ENCODE measurements at regions of chr17 and their contacts with region 1.

Region 1: DNA sequence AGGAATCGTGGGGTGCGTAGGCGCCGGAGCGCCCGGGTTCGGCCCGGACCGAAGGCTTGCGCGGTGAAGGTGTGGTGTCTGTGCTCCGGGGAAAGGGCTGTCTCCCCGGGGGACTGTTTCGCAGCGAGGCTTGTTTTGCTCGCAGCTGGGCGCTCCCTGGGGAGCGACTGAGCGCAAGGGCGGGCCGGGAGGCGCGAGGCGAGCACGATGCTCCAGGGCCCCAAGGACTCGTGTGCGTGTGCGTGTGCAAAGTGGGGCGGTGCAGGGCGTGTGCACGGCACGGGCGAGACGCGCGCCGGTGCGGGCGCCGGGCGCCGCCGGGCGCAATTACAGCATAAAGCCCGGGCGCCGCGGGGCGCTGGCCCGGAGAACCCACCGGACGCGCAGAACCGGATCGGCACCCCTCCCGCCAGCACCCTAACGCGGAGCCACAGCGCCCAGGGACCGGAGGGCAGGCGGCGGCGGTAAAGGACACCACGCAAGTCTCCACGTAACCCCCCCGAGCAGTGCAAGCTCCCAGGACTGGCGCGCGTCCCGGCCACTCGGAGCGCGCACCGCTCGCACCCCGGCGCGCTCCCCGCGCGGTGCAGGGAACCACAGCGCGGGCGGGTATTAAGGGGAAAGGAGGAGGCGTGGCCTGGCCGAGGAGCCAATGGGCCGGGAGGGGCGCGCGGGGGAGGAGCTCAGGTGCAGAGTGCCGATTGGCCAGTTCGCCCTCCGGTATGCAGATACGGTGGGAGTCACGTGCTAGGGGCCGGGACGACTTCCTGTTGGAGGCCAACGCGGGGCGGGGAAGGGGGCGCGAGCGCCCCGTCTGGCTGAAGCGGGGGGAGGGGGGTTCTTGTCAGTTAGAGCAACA is at the start of gene TNRC6C:
- DNase-seq: peak; percentile 87
- ATAC-seq: peak; percentile 96
- H3K4me3 ChIP-seq: peak within 1 kb of the TSS; percentile 75
- H3K27ac ChIP-seq: no peak within 1 kb of the TSS
- H3K4me1 ChIP-seq: peaks cover 16% of the 10 kb centered on the region
- H3K27me3 ChIP-seq: peaks cover 0 to 3% of the 10 kb centered on the region in 2 experiments; a peak in 2 of 4 replicates
- CTCF ChIP-seq: peak in 2 of 3 experiments; percentile 20 to 38; a peak in 3 of 6 replicates
- EP300 ChIP-seq: no peak; a peak in 2 of 4 replicates
- POLR2A ChIP-seq: peak; percentile 100
- RAD21 ChIP-seq: no peak
- polyA plus RNA-seq, gene TNRC6C: 0.40 to 0.43 TPM

Region 2: GRCh38 chr17:77319211-77320043 is 638.7 kb before region 1 on chr17:
- CTCF ChIA-PET with region 1: no interaction called
- POLR2A ChIA-PET with region 1: interaction called, 7 read pairs
- RAD21 ChIA-PET with region 1: no interaction called
- SMC1A ChIA-PET with region 1: no interaction called
- in situ Hi-C with region 1: no loop called
- intact Hi-C with region 1: loop called (anchors 10 kb)
- DNase-seq: no peak
- ATAC-seq: peak; percentile 43
- H3K4me3 ChIP-seq: peak overlapping the region; percentile 84
- H3K27ac ChIP-seq: peak overlapping the region; percentile 88
- H3K4me1 ChIP-seq: peaks cover 50% of the 10 kb centered on the region
- H3K27me3 ChIP-seq: no peaks in the 10 kb centered on the region
- CTCF ChIP-seq: no peak
- EP300 ChIP-seq: peak in 1 of 2 experiments; percentile 46; a peak in 1 of 4 replicates
- POLR2A ChIP-seq: peak; percentile 82
- RAD21 ChIP-seq: no peak

Region 3: GRCh38 chr17:77834170-77835115 is 123.6 kb before region 1 on chr17:
- CTCF ChIA-PET with region 1: no interaction called
- POLR2A ChIA-PET with region 1: interaction called, 9 read pairs
- RAD21 ChIA-PET with region 1: interaction called, 21 read pairs
- SMC1A ChIA-PET with region 1: interaction called, 7 read pairs
- in situ Hi-C with region 1: no loop called
- intact Hi-C with region 1: no loop called
- DNase-seq: peak; percentile 49
- ATAC-seq: peak; percentile 97
- H3K4me3 ChIP-seq: no peak overlapping the region
- H3K27ac ChIP-seq: no peak overlapping the region
- H3K4me1 ChIP-seq: peaks cover 6% of the 10 kb centered on the region
- H3K27me3 ChIP-seq: no peaks in the 10 kb centered on the region; a peak in 1 of 4 replicates
- CTCF ChIP-seq: no peak
- EP300 ChIP-seq: no peak
- POLR2A ChIP-seq: no peak
- RAD21 ChIP-seq: no peak

Region 4: DNA sequence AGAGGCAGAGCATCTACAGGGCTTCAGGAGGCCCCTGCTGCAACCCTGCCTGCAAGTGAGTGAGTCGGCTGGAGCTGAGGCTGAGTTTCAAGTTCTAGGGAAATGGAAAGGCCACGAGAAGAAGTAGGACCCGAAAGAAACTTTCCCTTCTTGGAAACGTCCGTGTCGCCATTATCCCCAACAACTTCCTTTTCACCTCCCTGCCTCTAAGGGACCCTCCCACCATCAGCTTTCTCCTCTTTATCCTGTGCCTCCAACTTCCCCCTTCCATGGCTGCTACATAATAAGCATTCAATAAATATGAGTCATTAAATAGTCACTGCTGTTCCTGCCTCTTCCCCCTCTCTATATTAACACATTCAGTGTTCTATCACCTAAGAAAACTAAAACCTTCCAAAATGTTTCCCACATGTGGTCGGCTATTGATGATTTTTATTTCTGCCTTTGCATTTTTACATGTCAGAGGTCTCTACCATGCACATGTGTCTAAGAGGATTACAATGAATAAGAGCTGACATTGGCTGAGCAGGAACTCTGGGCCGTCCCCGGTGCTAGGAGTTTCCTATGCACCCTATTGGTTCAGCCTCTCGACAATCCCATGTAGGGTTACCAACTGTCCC is 115.4 kb before region 1 on chr17:
- CTCF ChIA-PET with region 1: no interaction called
- POLR2A ChIA-PET with region 1: interaction called, 18 read pairs
- RAD21 ChIA-PET with region 1: interaction called, 7 read pairs
- SMC1A ChIA-PET with region 1: interaction called, 5 read pairs
- in situ Hi-C with region 1: no loop called
- intact Hi-C with region 1: no loop called
- DNase-seq: no peak
- ATAC-seq: no peak
- H3K4me3 ChIP-seq: no peak overlapping the region
- H3K27ac ChIP-seq: no peak overlapping the region
- H3K4me1 ChIP-seq: peaks cover 14% of the 10 kb centered on the region
- H3K27me3 ChIP-seq: no peaks in the 10 kb centered on the region
- CTCF ChIP-seq: no peak
- EP300 ChIP-seq: no peak
- POLR2A ChIP-seq: no peak
- RAD21 ChIP-seq: no peak

Region 5: GRCh38 chr17:77869665-77870132 is 88.4 kb before region 1 on chr17:
- CTCF ChIA-PET with region 1: interaction called, 3 read pairs
- POLR2A ChIA-PET with region 1: interaction called, 12 read pairs
- RAD21 ChIA-PET with region 1: interaction called, 10 read pairs
- SMC1A ChIA-PET with region 1: interaction called, 6 read pairs
- in situ Hi-C with region 1: no loop called
- intact Hi-C with region 1: no loop called
- DNase-seq: peak; percentile 87
- ATAC-seq: peak; percentile 97
- H3K4me3 ChIP-seq: no peak overlapping the region
- H3K27ac ChIP-seq: no peak overlapping the region
- H3K4me1 ChIP-seq: peaks cover 22% of the 10 kb centered on the region
- H3K27me3 ChIP-seq: peaks cover 0 to 4% of the 10 kb centered on the region in 2 experiments; a peak in 1 of 4 replicates
- CTCF ChIP-seq: peak in 1 of 3 experiments; percentile 13; a peak in 1 of 6 replicates
- EP300 ChIP-seq: peak; percentile 86 to 91; a peak in 3 of 4 replicates
- POLR2A ChIP-seq: no peak
- RAD21 ChIP-seq: no peak

Region 6: GRCh38 chr17:77881545-77881944 is 76.5 kb before region 1 on chr17:
- CTCF ChIA-PET with region 1: no interaction called
- POLR2A ChIA-PET with region 1: interaction called, 10 read pairs
- RAD21 ChIA-PET with region 1: interaction called, 16 read pairs
- SMC1A ChIA-PET with region 1: interaction called, 6 read pairs
- in situ Hi-C with region 1: no loop called
- intact Hi-C with region 1: loop called (anchors 5 kb)
- DNase-seq: peak; percentile 89
- ATAC-seq: peak; percentile 96
- H3K4me3 ChIP-seq: peak overlapping the region; percentile 4; the same call in 1 of the 2 replicates
- H3K27ac ChIP-seq: no peak overlapping the region; the same call in 1 of the 2 replicates
- H3K4me1 ChIP-seq: peaks cover 21% of the 10 kb centered on the region
- H3K27me3 ChIP-seq: no peaks in the 10 kb centered on the region; a peak in 2 of 4 replicates
- CTCF ChIP-seq: no peak
- EP300 ChIP-seq: peak; percentile 70 to 90; a peak in 3 of 4 replicates
- POLR2A ChIP-seq: no peak
- RAD21 ChIP-seq: peak; percentile 29; the same call in 1 of the 2 replicates

Region 7: GRCh38 chr17:77907532-77907991 is 50.5 kb before region 1 on chr17:
- CTCF ChIA-PET with region 1: no interaction called
- POLR2A ChIA-PET with region 1: no interaction called
- RAD21 ChIA-PET with region 1: no interaction called
- SMC1A ChIA-PET with region 1: no interaction called
- in situ Hi-C with region 1: no loop called
- intact Hi-C with region 1: no loop called
- DNase-seq: no peak
- ATAC-seq: no peak
- H3K4me3 ChIP-seq: no peak overlapping the region
- H3K27ac ChIP-seq: no peak overlapping the region
- H3K4me1 ChIP-seq: no peaks in the 10 kb centered on the region
- H3K27me3 ChIP-seq: peaks cover 0 to 1% of the 10 kb centered on the region in 2 experiments; a peak in 3 of 4 replicates
- CTCF ChIP-seq: no peak
- EP300 ChIP-seq: no peak
- POLR2A ChIP-seq: no peak
- RAD21 ChIP-seq: no peak

Region 8: DNA sequence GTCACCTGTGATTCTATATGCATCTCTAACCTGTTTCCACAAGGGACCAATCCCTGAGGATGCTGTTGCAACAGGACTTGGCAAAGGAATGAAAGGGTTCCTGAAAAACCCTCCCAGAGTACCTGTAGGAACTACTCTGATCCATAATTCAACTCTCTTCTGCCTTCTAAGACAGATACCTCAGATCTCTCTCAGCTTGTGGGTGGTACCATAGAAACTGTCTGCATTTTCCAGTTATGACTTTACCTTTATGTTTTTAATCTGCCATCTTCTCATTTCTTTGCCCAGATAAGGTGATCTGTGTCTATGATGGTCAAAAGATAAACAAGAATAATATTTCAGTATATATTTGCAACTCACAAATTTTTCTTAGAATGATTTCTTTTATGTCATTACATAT is 105.4 kb after region 1 on chr17:
- CTCF ChIA-PET with region 1: no interaction called
- POLR2A ChIA-PET with region 1: no interaction called
- RAD21 ChIA-PET with region 1: no interaction called
- SMC1A ChIA-PET with region 1: no interaction called
- in situ Hi-C with region 1: no loop called
- intact Hi-C with region 1: no loop called
- DNase-seq: no peak
- ATAC-seq: no peak
- H3K4me3 ChIP-seq: no peak overlapping the region
- H3K27ac ChIP-seq: no peak overlapping the region
- H3K4me1 ChIP-seq: no peaks in the 10 kb centered on the region
- H3K27me3 ChIP-seq: no peaks in the 10 kb centered on the region
- CTCF ChIP-seq: no peak
- EP300 ChIP-seq: no peak
- POLR2A ChIP-seq: no peak
- RAD21 ChIP-seq: no peak

Region 9: DNA sequence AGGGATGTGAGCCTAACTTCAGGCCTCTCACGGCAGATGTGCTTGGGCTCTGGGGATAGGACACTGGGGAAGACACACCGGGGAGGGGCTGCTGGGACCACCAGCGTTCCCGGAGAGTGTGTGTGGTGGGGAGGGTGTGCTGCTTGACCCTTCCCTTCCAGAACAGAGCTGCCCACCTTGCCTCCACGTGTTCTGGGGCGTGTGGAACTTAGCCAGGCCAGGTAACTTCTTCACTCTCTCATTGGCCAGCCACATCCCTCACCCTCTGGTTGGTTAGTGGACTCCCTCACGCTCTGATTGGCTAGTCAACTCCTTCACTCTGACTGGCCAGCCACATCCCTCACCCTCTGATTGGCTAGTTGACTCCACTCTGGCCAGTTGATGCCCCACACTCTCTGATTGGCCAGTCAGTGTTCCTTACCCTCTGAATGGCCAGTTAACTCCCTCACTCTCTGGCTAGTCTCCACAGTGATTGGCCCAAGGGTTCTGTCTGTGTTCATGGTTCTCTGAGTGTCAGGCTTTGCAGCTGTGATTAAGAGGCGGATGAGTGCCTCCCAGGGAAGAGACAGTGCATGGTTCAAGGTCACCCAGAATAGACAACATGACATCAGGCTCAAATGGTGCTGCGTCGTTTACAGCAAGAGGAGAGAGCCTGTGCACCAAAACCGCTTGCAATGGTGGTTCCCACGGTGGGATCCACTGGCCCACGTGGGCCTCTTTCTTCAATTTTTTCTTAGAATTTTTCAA is 283.4 kb after region 1 on chr17:
- CTCF ChIA-PET with region 1: no interaction called
- POLR2A ChIA-PET with region 1: no interaction called
- RAD21 ChIA-PET with region 1: no interaction called
- SMC1A ChIA-PET with region 1: no interaction called
- in situ Hi-C with region 1: no loop called
- intact Hi-C with region 1: no loop called
- DNase-seq: no peak
- ATAC-seq: peak; percentile 60
- H3K4me3 ChIP-seq: no peak overlapping the region
- H3K27ac ChIP-seq: no peak overlapping the region
- H3K4me1 ChIP-seq: peaks cover 20% of the 10 kb centered on the region
- H3K27me3 ChIP-seq: no peaks in the 10 kb centered on the region
- CTCF ChIP-seq: no peak
- EP300 ChIP-seq: no peak
- POLR2A ChIP-seq: no peak
- RAD21 ChIP-seq: no peak